Adrenal gland (tissue), 19 donors: ENCODE measurements at regions of chr5 and their contacts with region 1.

Region 1: GRCh38 chr5:102583276-102584124 is 84.7 kb upstream of the SLCO6A1 start:
- DNase-seq: no peak
- H3K4me3 ChIP-seq: peak overlapping the region in 1 of 4 donors; percentile 6
- H3K27ac ChIP-seq: no peak overlapping the region
- H3K4me1 ChIP-seq: no peaks in the 10 kb centered on the region
- H3K27me3 ChIP-seq: no peaks in the 10 kb centered on the region
- CTCF ChIP-seq: peak; percentile 1 to 73 (median 54)
- POLR2A ChIP-seq: no peak

Region 2: DNA sequence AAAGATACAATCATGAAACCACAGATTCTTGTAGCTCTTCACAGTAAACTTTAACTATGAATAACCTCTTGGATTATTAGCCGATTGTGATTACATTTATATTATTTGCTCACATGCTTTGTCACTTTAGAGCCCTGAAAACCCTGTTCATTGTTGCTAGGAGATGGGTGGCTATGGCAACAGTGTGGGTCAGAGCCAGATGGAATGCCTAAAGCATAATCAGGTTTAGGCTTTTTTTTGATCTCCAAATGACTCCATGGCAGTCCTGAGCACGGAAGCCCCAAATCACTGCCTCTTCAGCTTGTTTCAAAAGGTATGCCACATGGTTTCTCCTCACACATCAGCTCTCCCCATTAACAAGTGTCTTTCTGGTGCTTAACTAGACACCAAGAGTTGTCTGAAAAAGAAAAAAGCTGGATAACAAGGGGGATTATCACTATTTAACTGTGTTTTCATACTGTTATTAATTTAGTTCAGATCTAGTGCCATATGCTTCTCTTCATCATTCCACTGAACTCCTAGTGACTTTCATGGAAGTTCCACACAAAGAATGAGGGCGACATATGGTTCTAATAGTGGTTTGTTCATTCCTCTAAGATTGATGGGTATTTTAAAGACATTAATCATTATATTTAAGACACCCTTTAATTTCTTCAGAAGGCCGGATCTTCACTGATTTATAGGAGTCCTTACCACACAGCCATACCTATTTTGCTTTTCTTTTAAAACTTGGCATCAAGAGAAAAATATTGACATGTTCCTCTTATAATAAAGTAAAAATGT is 82.9 kb after region 1 on chr5:
- intact Hi-C with region 1: loop called in 1 of 2 experiments (anchors 10 kb)
- DNase-seq: peak; percentile 49 to 83 (median 56)
- H3K4me3 ChIP-seq: no peak overlapping the region
- H3K27ac ChIP-seq: peak overlapping the region; percentile 24 to 85 (median 72)
- H3K4me1 ChIP-seq: peaks cover 31 to 35% of the 10 kb centered on the region in 2 donors
- H3K27me3 ChIP-seq: no peaks in the 10 kb centered on the region
- CTCF ChIP-seq: no peak
- POLR2A ChIP-seq: no peak

Region 3: DNA sequence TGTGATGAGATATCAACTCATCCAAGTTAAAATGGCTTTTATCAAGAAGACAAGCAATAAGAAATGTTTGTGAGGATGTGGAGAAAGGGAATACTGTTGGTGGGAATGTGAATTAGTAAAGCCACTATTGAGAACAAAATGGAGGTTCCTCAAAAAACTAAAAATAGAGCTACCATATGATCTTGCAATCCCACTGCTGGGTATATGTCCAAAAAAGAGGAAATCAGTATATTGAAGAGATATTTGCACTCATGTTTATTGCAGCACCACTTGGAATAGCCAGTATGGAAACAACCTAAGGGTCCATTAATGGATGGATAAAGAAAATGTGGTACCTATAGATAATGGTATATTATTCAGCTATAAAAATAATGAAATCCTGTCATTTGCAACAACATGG is 561.7 kb after region 1 on chr5:
- intact Hi-C with region 1: loop called in 1 of 2 experiments (anchors 10 kb)
- DNase-seq: no peak
- H3K4me3 ChIP-seq: no peak overlapping the region
- H3K27ac ChIP-seq: no peak overlapping the region
- H3K4me1 ChIP-seq: no peaks in the 10 kb centered on the region
- H3K27me3 ChIP-seq: no peaks in the 10 kb centered on the region
- CTCF ChIP-seq: no peak
- POLR2A ChIP-seq: no peak